MCF 10A (cell line): ENCODE measurements at regions of chr2 and their contacts with region 1.

Region 1: GRCh38 chr2:238596571-238597551 is 170.1 kb downstream of the ASB1 start:
- DNase-seq: peak; percentile 97
- H3K4me3 Mint-ChIP-seq: peak overlapping the region; percentile 33
- H3K27ac Mint-ChIP-seq: peak overlapping the region; percentile 68
- H3K4me1 Mint-ChIP-seq: peaks cover 25% of the 10 kb centered on the region
- H3K27me3 Mint-ChIP-seq: no peaks in the 10 kb centered on the region
- CTCF ChIP-seq: no peak

Region 2: GRCh38 chr2:238561227-238561626 is 35.6 kb before region 1 on chr2:
- CTCF ChIA-PET with region 1: no interaction called
- POLR2A ChIA-PET with region 1: interaction called, 4 read pairs
- intact Hi-C with region 1: loop called (anchors 1 kb)
- DNase-seq: peak; percentile 13
- H3K4me3 Mint-ChIP-seq: no peak overlapping the region
- H3K27ac Mint-ChIP-seq: no peak overlapping the region
- H3K4me1 Mint-ChIP-seq: peaks cover 8% of the 10 kb centered on the region
- H3K27me3 Mint-ChIP-seq: peaks cover 4% of the 10 kb centered on the region
- CTCF ChIP-seq: no peak

Region 3: GRCh38 chr2:238644095-238645081 is 47.5 kb after region 1 on chr2:
- CTCF ChIA-PET with region 1: interaction called, 4 read pairs
- POLR2A ChIA-PET with region 1: interaction called, 16 read pairs
- intact Hi-C with region 1: no loop called
- DNase-seq: peak; percentile 78
- H3K4me3 Mint-ChIP-seq: peak overlapping the region; percentile 8
- H3K27ac Mint-ChIP-seq: peak overlapping the region; percentile 86
- H3K4me1 Mint-ChIP-seq: peaks cover 23% of the 10 kb centered on the region
- H3K27me3 Mint-ChIP-seq: no peaks in the 10 kb centered on the region
- CTCF ChIP-seq: no peak